GM18951 (cell line): ENCODE measurements at regions of chr1 and their contacts with region 1.

Region 1: DNA sequence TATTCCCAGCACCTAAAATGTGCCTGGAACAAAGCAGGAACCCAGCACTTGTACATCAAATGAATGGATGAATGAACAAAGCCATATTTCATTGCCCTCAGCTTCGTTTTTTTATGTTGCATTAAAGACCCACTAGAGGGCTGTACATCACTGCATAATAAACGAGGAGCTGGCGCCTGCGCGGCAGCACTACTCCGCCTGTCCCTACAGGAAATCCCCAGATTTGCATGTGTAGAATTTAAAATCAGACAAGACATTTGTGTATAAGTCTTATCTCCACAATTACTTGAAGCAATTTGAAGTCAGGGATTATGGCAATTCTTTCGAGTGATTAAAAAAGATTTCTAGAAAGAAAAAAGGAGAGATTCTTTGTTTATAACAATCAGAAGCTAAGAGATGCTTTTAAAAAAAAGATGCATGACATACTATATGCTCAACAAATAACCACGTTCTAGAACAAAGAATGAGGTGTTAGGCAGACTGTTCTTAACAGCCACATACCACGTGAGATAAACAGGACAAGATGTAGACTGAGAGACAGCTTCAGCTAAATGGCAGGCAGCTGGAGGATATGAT is 5.4 kb upstream of the NEK2 start:
- POLR2A ChIP-seq: no peak

Region 2: GRCh38 chr1:212035123-212035834 is 354.4 kb after region 1 on chr1 and contains the starts of genes DTL and INTS7:
- in situ Hi-C with region 1: loop called (anchors 10 kb)
- POLR2A ChIP-seq: peak; percentile 91

Region 3: DNA sequence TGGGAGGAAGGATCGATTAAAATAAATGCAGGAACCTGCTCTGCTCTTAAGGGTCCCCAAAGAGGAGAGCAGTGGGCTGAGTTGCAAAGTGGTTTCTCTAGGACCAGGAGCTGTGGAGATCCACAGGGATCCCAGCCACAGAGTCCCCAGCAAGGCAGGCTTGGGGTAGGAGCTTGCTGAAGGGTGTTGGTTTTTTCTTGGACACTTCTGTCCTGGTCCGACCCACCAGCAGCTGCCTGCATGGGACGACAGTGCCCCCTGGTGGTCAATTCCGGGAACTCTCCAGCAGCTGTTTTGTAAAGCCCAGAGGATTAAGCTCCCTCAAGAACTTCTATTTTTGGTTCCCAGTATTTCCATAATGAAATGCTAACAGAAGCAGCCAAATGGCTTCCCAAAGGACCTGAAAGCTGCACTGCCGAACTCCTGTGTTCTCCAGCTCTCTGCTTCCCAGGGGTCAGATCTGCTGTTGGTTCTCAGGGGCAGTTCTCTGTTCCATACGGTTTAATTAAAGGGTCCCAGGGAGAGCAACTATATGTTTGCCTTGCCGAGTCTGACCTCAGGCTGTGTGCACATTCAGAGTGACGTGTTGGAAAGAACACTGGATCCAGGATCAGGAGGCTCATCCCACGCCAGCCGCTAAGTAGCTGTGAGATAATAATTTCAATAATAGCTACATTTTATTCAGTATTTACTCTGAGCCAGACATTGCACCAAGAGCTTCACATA is 775.1 kb after region 1 on chr1:
- in situ Hi-C with region 1: loop called (anchors 10 kb)
- POLR2A ChIP-seq: no peak